ENCODE measurements at regions of chr14 and their contacts with region 1.

Region 1: GRCh38 chr14:101964297-101965144 is at the start of gene DYNC1H1:
- DNase-seq: peak; percentile 73
- ATAC-seq: peak; percentile 82
- H3K4me3 ChIP-seq: peak within 1 kb of the TSS; percentile 63 to 95
- H3K27ac ChIP-seq: peak within 1 kb of the TSS; percentile 93
- H3K4me1 ChIP-seq: peaks cover 23 to 49% of the 10 kb centered on the region in 2 experiments; a peak in 3 of 4 replicates
- H3K27me3 ChIP-seq: no peaks in the 10 kb centered on the region
- CTCF ChIP-seq: no peak
- POLR2A ChIP-seq: peak; percentile 90
- RAD21 ChIP-seq: no peak
- total RNA-seq, gene DYNC1H1: 361 TPM

Region 2: DNA sequence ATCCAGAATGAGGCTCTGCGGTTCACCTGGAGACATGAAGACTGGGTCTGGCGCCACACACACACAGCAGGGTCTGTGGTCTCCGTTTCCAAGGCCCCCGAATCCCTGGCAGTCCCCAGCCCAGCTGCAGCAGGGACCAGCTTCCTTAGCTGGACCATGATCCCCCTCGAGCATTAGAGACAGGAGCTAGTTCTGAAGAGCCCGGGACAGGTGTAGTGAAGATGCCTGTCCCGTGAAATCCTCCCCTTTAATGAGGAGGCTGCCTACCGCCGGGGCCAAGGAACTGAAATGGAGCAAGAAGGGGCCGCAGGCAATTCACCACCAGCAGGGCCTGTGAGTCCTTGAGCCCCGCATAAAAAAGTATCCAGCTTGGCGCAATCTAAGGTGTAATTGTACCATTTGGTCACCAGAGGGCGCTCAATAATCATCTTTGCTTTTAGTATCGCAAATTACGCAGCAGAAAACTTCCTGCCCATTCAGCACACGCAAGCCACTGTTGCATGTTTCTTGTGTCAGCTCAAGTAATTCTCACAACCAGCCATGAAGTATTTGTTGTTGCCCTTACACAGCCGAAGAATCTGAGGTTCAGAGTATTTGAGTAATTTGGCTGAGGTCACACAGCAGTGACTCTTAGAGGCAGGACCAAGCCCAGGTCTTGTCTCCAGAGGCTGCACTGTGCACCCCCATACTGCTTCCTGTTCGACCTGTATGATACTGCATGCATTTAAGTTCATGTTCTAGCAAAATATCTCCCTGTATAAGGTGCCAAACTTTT is 257.3 kb before region 1 on chr14:
- CTCF ChIA-PET with region 1: interaction called, 7 read pairs
- POLR2A ChIA-PET with region 1: no interaction called
- RAD21 ChIA-PET with region 1: no interaction called
- intact Hi-C with region 1: loop called (anchors 2 kb)
- DNase-seq: peak; percentile 70
- ATAC-seq: peak; percentile 72
- H3K4me3 ChIP-seq: peak overlapping the region in 1 of 2 experiments; percentile 36; a peak in 2 of 4 replicates
- H3K27ac ChIP-seq: no peak overlapping the region
- H3K4me1 ChIP-seq: peaks cover 7 to 32% of the 10 kb centered on the region in 2 experiments
- H3K27me3 ChIP-seq: no peaks in the 10 kb centered on the region
- CTCF ChIP-seq: peak; percentile 56 to 85 (median 81); a peak in 5 of 6 replicates
- POLR2A ChIP-seq: no peak
- RAD21 ChIP-seq: peak; percentile 98

Region 3: DNA sequence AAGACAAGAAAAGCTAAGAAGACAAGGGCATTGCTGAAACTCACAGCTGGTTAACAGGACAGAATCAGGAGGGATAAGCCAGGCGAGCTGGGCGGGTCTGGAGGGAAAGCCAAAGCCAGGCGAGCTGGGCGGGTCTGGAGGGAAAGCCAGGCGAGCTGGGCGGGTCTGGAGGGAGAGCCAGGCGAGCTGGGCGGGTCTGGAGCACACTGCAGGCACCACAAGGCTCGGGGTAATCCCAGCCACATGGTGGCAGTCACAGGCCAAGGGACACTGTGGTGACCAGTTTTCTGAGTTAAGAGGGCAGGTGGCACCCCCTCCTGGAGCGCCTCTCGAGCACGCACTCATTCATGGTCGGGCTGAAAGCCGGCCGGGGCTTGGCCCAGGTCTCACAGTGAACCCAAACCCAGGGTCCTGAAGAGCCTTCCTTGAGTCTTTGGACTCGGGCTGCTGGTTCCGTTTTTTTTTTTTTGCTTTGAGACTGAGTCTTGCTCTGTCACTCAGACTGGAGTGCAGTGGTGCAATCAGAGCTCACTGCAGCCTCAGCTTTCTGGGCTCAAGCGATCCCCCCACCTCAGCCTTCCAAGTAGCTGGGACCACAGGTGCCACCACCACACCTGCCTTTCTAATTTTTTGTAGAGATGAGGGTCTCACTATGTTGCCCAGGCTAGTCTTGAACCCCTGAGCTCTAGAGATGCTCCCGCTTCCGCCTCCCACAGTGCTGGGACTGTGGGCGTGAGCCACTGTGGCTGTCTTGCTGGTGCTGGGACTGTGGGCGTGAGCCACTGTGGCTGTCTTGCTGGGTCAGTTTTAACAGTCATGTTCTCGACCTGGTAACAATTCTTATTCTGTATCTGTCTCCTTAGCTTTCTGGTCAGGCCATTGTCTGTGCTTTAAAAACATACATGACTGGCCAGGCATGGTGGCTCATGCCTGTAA is 82.1 kb after region 1 on chr14:
- CTCF ChIA-PET with region 1: interaction called, 9 read pairs
- POLR2A ChIA-PET with region 1: no interaction called
- RAD21 ChIA-PET with region 1: no interaction called
- intact Hi-C with region 1: loop called (anchors 2 kb)
- DNase-seq: peak; percentile 82
- ATAC-seq: peak; percentile 99
- H3K4me3 ChIP-seq: no peak overlapping the region
- H3K27ac ChIP-seq: peak overlapping the region; percentile 29
- H3K4me1 ChIP-seq: peaks cover 0 to 10% of the 10 kb centered on the region in 2 experiments; a peak in 2 of 4 replicates
- H3K27me3 ChIP-seq: no peaks in the 10 kb centered on the region
- CTCF ChIP-seq: peak; percentile 78 to 99 (median 80)
- POLR2A ChIP-seq: no peak
- RAD21 ChIP-seq: peak; percentile 94

Region 4: GRCh38 chr14:102139248-102140026 is 174.9 kb after region 1 on chr14 and contains the start of gene WDR20:
- CTCF ChIA-PET with region 1: no interaction called
- POLR2A ChIA-PET with region 1: no interaction called
- RAD21 ChIA-PET with region 1: no interaction called
- intact Hi-C with region 1: loop called (anchors 5 kb)
- DNase-seq: peak; percentile 94
- ATAC-seq: peak; percentile 92
- H3K4me3 ChIP-seq: peak within 1 kb of the TSS; percentile 91 to 97
- H3K27ac ChIP-seq: peak within 1 kb of the TSS; percentile 76
- H3K4me1 ChIP-seq: peaks cover 5 to 16% of the 10 kb centered on the region in 2 experiments; a peak in 3 of 4 replicates
- H3K27me3 ChIP-seq: no peaks in the 10 kb centered on the region
- CTCF ChIP-seq: 0 out of 6 replicates have a peak, but pooled peaks of 1 of the 3 experiments have one; percentile 17
- POLR2A ChIP-seq: peak; percentile 64
- RAD21 ChIP-seq: no peak; the same call in 1 of the 2 replicates
- total RNA-seq, gene WDR20: 21.1 TPM

Region 5: GRCh38 chr14:102314242-102315011 is 349.9 kb after region 1 on chr14:
- CTCF ChIA-PET with region 1: no interaction called
- POLR2A ChIA-PET with region 1: interaction called, 3 read pairs
- RAD21 ChIA-PET with region 1: no interaction called
- intact Hi-C with region 1: loop called (anchors 2 kb)
- DNase-seq: peak; percentile 57
- ATAC-seq: peak; percentile 62
- H3K4me3 ChIP-seq: peak overlapping the region; percentile 39 to 65
- H3K27ac ChIP-seq: no peak overlapping the region
- H3K4me1 ChIP-seq: peaks cover 30 to 53% of the 10 kb centered on the region in 2 experiments
- H3K27me3 ChIP-seq: no peaks in the 10 kb centered on the region
- CTCF ChIP-seq: peak in 2 of 3 experiments; percentile 74 to 97; a peak in 4 of 6 replicates
- POLR2A ChIP-seq: no peak
- RAD21 ChIP-seq: no peak